ENCODE measurements at regions of chr14 and their contacts with region 1.

Region 1: DNA sequence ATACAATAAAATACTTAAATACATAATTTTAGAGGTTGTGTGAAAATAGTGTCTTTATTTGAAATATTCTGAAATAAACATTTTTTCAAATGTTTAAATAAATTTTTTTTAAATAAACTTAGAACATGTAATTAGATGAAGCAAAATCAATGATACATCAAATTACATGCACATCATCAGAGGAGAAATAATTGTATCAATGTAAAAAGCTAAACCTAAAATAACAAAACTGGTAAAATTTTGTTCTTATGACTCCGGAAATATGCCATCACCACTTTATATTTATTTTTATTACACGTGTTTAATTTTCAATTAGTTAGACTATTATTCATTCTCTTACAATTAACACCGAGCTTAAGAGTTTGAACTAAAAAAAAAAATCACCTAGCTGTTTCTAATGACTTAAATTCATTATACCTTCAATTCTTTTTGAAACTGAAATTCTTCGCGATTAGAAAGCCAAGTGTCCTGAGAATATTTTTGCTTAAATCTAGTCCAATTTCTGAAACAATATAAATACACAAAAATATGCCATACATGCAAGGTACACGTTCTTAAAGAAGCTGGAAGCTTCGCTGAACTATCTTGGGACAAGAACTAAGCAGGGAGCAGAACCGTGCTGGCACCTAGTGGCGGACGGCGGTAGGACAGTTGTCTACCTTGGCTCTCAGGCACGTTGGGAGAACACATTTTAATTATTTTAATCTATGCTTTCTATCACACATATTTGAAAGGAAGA is 230.5 kb downstream of the SLC25A21 start:
- DNase-seq: peak; percentile 84
- H3K4me3 Mint-ChIP-seq: no peak overlapping the region
- H3K27ac Mint-ChIP-seq: no peak overlapping the region
- H3K4me1 Mint-ChIP-seq: peaks cover 8% of the 10 kb centered on the region
- H3K27me3 Mint-ChIP-seq: no peaks in the 10 kb centered on the region
- CTCF ChIP-seq: peak; percentile 80

Region 2: GRCh38 chr14:36647824-36648753 is 293.9 kb before region 1 on chr14:
- CTCF ChIA-PET with region 1: interaction called, 36 read pairs
- intact Hi-C with region 1: loop called (anchors 1 kb)
- DNase-seq: peak; percentile 63
- H3K4me3 Mint-ChIP-seq: peak overlapping the region; percentile 79
- H3K27ac Mint-ChIP-seq: no peak overlapping the region
- H3K4me1 Mint-ChIP-seq: no peaks in the 10 kb centered on the region
- H3K27me3 Mint-ChIP-seq: peaks cover 44% of the 10 kb centered on the region
- CTCF ChIP-seq: peak; percentile 55

Region 3: GRCh38 chr14:36655963-36656686 is 285.8 kb before region 1 on chr14:
- CTCF ChIA-PET with region 1: interaction called, 10 read pairs
- intact Hi-C with region 1: no loop called
- DNase-seq: peak; percentile 86
- H3K4me3 Mint-ChIP-seq: peak overlapping the region; percentile 66
- H3K27ac Mint-ChIP-seq: peak overlapping the region; percentile 28
- H3K4me1 Mint-ChIP-seq: peaks cover 13% of the 10 kb centered on the region
- H3K27me3 Mint-ChIP-seq: peaks cover 58% of the 10 kb centered on the region
- CTCF ChIP-seq: peak; percentile 42

Region 4: GRCh38 chr14:36773136-36773540 is 168.8 kb before region 1 on chr14:
- CTCF ChIA-PET with region 1: interaction called, 4 read pairs
- intact Hi-C with region 1: loop called (anchors 10 kb)
- DNase-seq: peak; percentile 10
- H3K4me3 Mint-ChIP-seq: no peak overlapping the region
- H3K27ac Mint-ChIP-seq: no peak overlapping the region
- H3K4me1 Mint-ChIP-seq: peaks cover 6% of the 10 kb centered on the region
- H3K27me3 Mint-ChIP-seq: no peaks in the 10 kb centered on the region
- CTCF ChIP-seq: no peak

Region 5: GRCh38 chr14:36817071-36817930 is 124.7 kb before region 1 on chr14:
- CTCF ChIA-PET with region 1: no interaction called
- intact Hi-C with region 1: no loop called
- DNase-seq: no peak
- H3K4me3 Mint-ChIP-seq: no peak overlapping the region
- H3K27ac Mint-ChIP-seq: no peak overlapping the region
- H3K4me1 Mint-ChIP-seq: peaks cover 8% of the 10 kb centered on the region
- H3K27me3 Mint-ChIP-seq: no peaks in the 10 kb centered on the region
- CTCF ChIP-seq: no peak

Region 6: GRCh38 chr14:36874396-36875161 is 67.4 kb before region 1 on chr14:
- CTCF ChIA-PET with region 1: no interaction called
- intact Hi-C with region 1: no loop called
- DNase-seq: no peak
- H3K4me3 Mint-ChIP-seq: no peak overlapping the region
- H3K27ac Mint-ChIP-seq: no peak overlapping the region
- H3K4me1 Mint-ChIP-seq: peaks cover 17% of the 10 kb centered on the region
- H3K27me3 Mint-ChIP-seq: no peaks in the 10 kb centered on the region
- CTCF ChIP-seq: no peak

Region 7: GRCh38 chr14:36981832-36982528 is 40.0 kb after region 1 on chr14:
- CTCF ChIA-PET with region 1: interaction called, 3 read pairs
- intact Hi-C with region 1: loop called (anchors 2 kb)
- DNase-seq: peak; percentile 13
- H3K4me3 Mint-ChIP-seq: no peak overlapping the region
- H3K27ac Mint-ChIP-seq: peak overlapping the region; percentile 62
- H3K4me1 Mint-ChIP-seq: peaks cover 31% of the 10 kb centered on the region
- H3K27me3 Mint-ChIP-seq: no peaks in the 10 kb centered on the region
- CTCF ChIP-seq: no peak

Region 8: GRCh38 chr14:37116933-37117849 is 175.2 kb after region 1 on chr14:
- CTCF ChIA-PET with region 1: interaction called, 10 read pairs
- intact Hi-C with region 1: loop called (anchors 2 kb)
- DNase-seq: no peak
- H3K4me3 Mint-ChIP-seq: no peak overlapping the region
- H3K27ac Mint-ChIP-seq: no peak overlapping the region
- H3K4me1 Mint-ChIP-seq: peaks cover 8% of the 10 kb centered on the region
- H3K27me3 Mint-ChIP-seq: no peaks in the 10 kb centered on the region
- CTCF ChIP-seq: peak; percentile 20

Region 9: DNA sequence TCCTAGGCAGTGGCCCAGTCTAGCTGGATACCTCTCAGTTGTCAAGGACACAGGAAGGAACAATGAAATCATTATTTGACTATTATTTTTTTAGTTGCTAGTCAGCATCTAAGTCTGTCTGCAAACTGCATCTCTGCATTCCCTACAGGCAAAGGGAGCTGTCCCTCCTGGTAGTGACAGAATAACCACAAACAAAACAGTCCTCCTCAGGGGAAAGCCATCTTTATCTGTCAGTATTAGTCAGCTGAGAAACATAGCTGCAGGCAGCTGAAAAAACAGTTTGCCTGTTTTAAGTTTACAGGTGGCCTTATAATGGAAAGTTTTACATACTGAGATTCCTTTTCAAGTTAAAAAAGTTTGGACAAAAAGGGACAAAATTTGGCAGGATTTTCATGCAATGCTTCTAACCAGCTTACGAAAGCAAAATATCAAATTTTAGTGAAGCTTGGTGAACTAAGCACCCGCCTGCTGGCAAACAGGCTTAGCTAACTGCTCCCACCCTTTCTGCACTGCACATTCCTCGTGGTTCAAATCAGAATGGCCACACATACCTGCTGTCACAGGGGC is 201.0 kb after region 1 on chr14:
- CTCF ChIA-PET with region 1: no interaction called
- intact Hi-C with region 1: loop called (anchors 10 kb)
- DNase-seq: no peak
- H3K4me3 Mint-ChIP-seq: no peak overlapping the region
- H3K27ac Mint-ChIP-seq: no peak overlapping the region
- H3K4me1 Mint-ChIP-seq: no peaks in the 10 kb centered on the region
- H3K27me3 Mint-ChIP-seq: no peaks in the 10 kb centered on the region
- CTCF ChIP-seq: no peak

Measured in Calu3 (cell line).